ENCODE measurements at regions of chr1 and their contacts with region 1.

Region 1: GRCh38 chr1:92817986-92818764 is 13.7 kb upstream of the RPL5 start:
- DNase-seq: no peak
- H3K4me3 ChIP-seq: no peak overlapping the region
- H3K4me3 Mint-ChIP-seq: no peak overlapping the region
- H3K27ac ChIP-seq: no peak overlapping the region
- H3K27ac Mint-ChIP-seq: no peak overlapping the region
- H3K4me1 ChIP-seq: no peaks in the 10 kb centered on the region
- H3K4me1 Mint-ChIP-seq: no peaks in the 10 kb centered on the region
- H3K27me3 ChIP-seq: no peaks in the 10 kb centered on the region
- H3K27me3 Mint-ChIP-seq: peaks cover 11 to 29% of the 10 kb centered on the region in 2 donors

Region 2: GRCh38 chr1:92749024-92749634 is 69.0 kb before region 1 on chr1:
- CTCF ChIA-PET with region 1: interaction called, 26 read pairs
- POLR2A ChIA-PET with region 1: no interaction called
- DNase-seq: peak in 2 of 5 donors; percentile 6 to 20
- H3K4me3 ChIP-seq: no peak overlapping the region
- H3K4me3 Mint-ChIP-seq: no peak overlapping the region
- H3K27ac ChIP-seq: no peak overlapping the region
- H3K27ac Mint-ChIP-seq: no peak overlapping the region
- H3K4me1 ChIP-seq: no peaks in the 10 kb centered on the region
- H3K4me1 Mint-ChIP-seq: no peaks in the 10 kb centered on the region
- H3K27me3 ChIP-seq: no peaks in the 10 kb centered on the region
- H3K27me3 Mint-ChIP-seq: peaks cover 0 to 22% of the 10 kb centered on the region in 2 donors

Measured in CD8-positive, alpha-beta memory T cell (primary cell).